Vagina (tissue), 2 donors: ENCODE measurements at regions of chr5 and their contacts with region 1.

Region 1: GRCh38 chr5:140547508-140548299 is at the start of gene EIF4EBP3:
- DNase-seq: peak; percentile 98
- H3K4me3 ChIP-seq: peak within 1 kb of the TSS; percentile 50 to 75
- H3K27ac ChIP-seq: peak within 1 kb of the TSS; percentile 89
- H3K4me1 ChIP-seq: peaks cover 33% of the 10 kb centered on the region
- H3K27me3 ChIP-seq: no peaks in the 10 kb centered on the region
- CTCF ChIP-seq: peak in 1 of 3 experiments; percentile 86
- POLR2A ChIP-seq: peak; percentile 46 to 76
- total RNA-seq, gene EIF4EBP3: 38.1 TPM

Region 2: DNA sequence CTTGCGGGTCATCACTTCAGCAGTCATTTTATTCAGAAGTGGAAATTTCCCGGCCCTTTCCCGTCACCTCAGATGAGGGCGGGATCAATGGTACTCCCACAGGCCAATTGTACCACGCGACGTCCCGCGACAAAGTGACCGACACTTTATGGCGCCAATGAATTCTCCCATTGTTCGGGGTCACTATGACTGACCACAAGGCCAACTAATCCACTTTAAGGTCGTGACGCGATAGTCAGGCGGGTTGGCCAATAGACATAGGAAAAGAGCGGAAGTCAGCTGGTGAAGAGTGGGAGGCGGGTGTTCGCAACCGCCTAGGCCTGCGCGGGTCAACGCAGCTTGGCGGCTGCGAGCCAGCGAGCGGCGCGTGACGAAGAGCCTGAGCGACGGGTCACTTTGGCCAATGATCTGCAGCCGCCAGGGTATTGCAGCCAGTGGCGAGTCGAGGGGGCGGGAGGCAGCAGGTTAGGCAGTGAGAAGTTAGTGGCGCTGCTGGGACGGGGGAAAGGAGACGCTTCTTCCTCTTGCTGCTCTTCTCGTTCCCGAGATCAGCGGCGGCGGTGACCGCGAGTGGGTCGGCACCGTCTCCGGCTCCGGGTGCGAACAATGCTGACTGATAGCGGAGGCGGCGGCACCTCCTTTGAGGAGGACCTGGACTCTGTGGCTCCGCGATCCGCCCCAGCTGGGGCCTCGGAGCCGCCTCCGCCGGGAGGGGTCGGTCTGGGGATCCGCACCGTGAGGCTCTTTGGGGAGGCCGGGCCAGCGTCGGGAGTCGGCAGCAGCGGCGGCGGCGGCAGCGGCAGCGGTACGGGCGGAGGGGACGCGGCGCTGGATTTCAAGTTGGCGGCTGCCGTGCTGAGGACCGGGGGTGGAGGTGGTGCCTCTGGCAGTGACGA is 146.1 kb before region 1 on chr5 and contains the start of gene ANKHD1:
- intact Hi-C with region 1: loop called (anchors 10 kb)
- DNase-seq: peak; percentile 99 to 100
- H3K4me3 ChIP-seq: peak within 1 kb of the TSS; percentile 98 to 99
- H3K27ac ChIP-seq: peak within 1 kb of the TSS; percentile 98
- H3K4me1 ChIP-seq: peaks cover 55% of the 10 kb centered on the region
- H3K27me3 ChIP-seq: no peaks in the 10 kb centered on the region
- CTCF ChIP-seq: no peak
- POLR2A ChIP-seq: peak; percentile 88 to 98
- total RNA-seq, gene ANKHD1: 140 TPM

Region 3: GRCh38 chr5:140513124-140513523 is 34.6 kb before region 1 on chr5:
- intact Hi-C with region 1: no loop called
- DNase-seq: no peak
- H3K4me3 ChIP-seq: no peak overlapping the region
- H3K27ac ChIP-seq: no peak overlapping the region
- H3K4me1 ChIP-seq: no peaks in the 10 kb centered on the region
- H3K27me3 ChIP-seq: no peaks in the 10 kb centered on the region
- CTCF ChIP-seq: no peak
- POLR2A ChIP-seq: no peak

Region 4: GRCh38 chr5:140647042-140647341 is 99.3 kb after region 1 on chr5:
- intact Hi-C with region 1: loop called (anchors 5 kb)
- DNase-seq: no peak
- H3K4me3 ChIP-seq: peak overlapping the region; percentile 64 to 76
- H3K27ac ChIP-seq: peak overlapping the region; percentile 66
- H3K4me1 ChIP-seq: peaks cover 33% of the 10 kb centered on the region
- H3K27me3 ChIP-seq: no peaks in the 10 kb centered on the region
- CTCF ChIP-seq: no peak
- POLR2A ChIP-seq: no peak